ENCODE measurements at regions of chr14 and their contacts with region 1.

Region 1: GRCh38 chr14:39034481-39035296 is 68.3 kb downstream of the SEC23A start:
- DNase-seq: no peak
- H3K4me3 ChIP-seq: no peak overlapping the region
- CTCF ChIP-seq: peak; percentile 18

Region 2: DNA sequence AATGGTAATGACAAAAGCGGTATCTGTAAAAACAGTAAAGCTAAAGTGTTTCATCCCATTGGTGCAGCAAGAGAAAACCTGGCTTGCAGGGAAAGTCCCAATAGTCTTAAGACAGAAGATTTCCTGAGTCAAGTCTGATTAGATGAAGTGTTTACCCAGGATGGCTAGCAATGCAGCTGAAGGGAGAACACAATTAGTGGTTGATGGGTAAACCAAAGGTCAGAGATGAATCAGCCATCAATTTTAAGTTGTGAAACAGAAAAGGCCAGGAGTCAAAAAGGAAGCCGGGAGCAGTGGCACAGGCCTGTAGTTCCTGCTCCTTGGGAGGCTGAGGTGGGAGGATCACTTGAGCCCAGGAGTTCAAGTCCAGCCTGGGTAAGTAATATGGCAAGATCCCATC is 15.7 kb after region 1 on chr14:
- CTCF ChIA-PET with region 1: interaction called, 11 read pairs
- POLR2A ChIA-PET with region 1: no interaction called
- DNase-seq: peak; percentile 58
- H3K4me3 ChIP-seq: no peak overlapping the region
- CTCF ChIP-seq: no peak

Measured in AG04449 (cell line).